MCF 10A (cell line): ENCODE measurements at regions of chr2 and their contacts with region 1.

Region 1: DNA sequence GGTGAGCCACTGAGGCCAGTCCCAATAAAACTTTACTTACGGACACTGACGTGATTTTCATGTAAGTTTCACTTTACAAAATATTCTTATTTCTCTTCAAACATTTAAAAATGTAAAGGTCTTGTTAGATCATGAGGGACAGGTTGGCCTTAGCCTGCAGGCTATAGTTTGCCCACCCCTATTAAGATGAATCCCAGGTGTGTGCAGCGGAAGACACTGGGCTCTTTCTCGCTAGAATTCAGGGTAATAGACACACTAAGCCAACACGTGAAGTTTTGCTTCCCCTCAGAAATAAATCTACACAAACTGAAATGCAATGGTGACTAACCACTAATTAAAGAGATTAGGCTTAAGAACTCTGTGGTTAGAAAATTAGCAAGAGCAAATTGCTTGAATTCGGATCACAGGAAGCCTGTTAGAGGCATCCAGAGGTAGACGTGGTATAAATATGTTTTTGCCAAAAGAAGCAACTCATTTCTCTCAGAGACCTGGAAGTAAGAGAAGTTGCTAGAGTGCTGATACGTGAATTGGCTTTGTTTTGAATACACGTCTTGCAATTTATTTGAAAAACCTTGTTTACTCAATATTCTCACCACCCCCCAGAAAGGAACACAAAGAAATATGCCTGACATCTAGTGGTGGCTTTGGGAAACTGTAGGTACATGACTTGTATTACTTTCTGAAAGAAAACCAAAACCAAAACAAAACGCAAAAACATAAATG is 151.6 kb downstream of the DTNB start:
- DNase-seq: peak; percentile 76
- H3K4me3 Mint-ChIP-seq: no peak overlapping the region
- H3K27ac Mint-ChIP-seq: peak overlapping the region; percentile 68
- H3K4me1 Mint-ChIP-seq: peaks cover 16% of the 10 kb centered on the region
- H3K27me3 Mint-ChIP-seq: no peaks in the 10 kb centered on the region
- CTCF ChIP-seq: peak; percentile 68

Region 2: GRCh38 chr2:25309402-25309801 is 212.4 kb before region 1 on chr2:
- CTCF ChIA-PET with region 1: no interaction called
- POLR2A ChIA-PET with region 1: no interaction called
- intact Hi-C with region 1: loop called (anchors 2 kb)
- DNase-seq: peak; percentile 38
- H3K4me3 Mint-ChIP-seq: no peak overlapping the region
- H3K27ac Mint-ChIP-seq: no peak overlapping the region
- H3K4me1 Mint-ChIP-seq: peaks cover 9% of the 10 kb centered on the region
- H3K27me3 Mint-ChIP-seq: no peaks in the 10 kb centered on the region
- CTCF ChIP-seq: peak; percentile 2

Region 3: GRCh38 chr2:25342372-25343186 is 179.2 kb before region 1 on chr2:
- CTCF ChIA-PET with region 1: no interaction called
- POLR2A ChIA-PET with region 1: interaction called, 4 read pairs
- intact Hi-C with region 1: loop called (anchors 1 kb)
- DNase-seq: peak; percentile 72
- H3K4me3 Mint-ChIP-seq: peak overlapping the region; percentile 79
- H3K27ac Mint-ChIP-seq: no peak overlapping the region
- H3K4me1 Mint-ChIP-seq: peaks cover 5% of the 10 kb centered on the region
- H3K27me3 Mint-ChIP-seq: no peaks in the 10 kb centered on the region
- CTCF ChIP-seq: peak; percentile 88

Region 4: GRCh38 chr2:25354116-25354515 is 167.7 kb before region 1 on chr2:
- CTCF ChIA-PET with region 1: no interaction called
- POLR2A ChIA-PET with region 1: no interaction called
- intact Hi-C with region 1: no loop called
- DNase-seq: no peak
- H3K4me3 Mint-ChIP-seq: no peak overlapping the region
- H3K27ac Mint-ChIP-seq: no peak overlapping the region
- H3K4me1 Mint-ChIP-seq: no peaks in the 10 kb centered on the region
- H3K27me3 Mint-ChIP-seq: peaks cover 12% of the 10 kb centered on the region
- CTCF ChIP-seq: no peak